Breast epithelium (tissue), 4 donors: ENCODE measurements at regions of chr6 and their contacts with region 1.

Region 1: DNA sequence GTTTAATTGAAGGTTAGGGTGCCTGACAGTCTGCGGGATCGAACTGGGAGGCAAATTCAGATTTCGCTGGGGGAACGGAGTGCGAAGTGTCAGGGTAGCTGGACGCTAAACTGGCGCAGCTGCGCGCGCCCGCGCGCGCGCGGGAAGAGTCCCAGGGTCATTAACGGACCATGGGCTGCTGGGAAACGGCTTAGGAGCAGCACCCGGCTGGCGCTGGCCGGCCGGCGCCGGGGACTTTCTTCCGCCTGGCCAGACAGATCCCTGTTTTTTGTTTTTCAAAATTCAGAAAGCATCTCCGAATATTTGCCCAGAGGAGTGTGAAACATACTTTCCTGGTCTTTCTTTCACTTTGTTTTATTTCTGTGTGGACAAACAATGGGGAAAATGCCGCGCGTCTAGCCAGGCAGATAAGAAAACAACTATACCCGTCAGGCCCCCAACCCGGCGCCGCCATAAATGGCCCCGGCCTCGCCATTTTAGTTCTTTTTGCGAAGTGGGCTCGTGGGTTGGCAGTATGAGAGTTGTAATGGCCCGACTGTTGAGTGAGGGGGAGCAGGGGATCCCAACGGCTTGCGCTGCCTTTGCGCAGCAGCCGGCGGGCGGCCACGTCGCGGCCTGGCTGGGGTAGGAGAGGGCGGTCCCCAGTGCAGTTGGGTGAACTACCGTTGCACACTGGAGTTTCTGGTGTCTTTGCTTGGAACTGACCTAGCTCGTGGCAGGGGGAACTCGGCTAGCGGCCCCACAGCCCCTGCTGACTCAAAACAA is 7.1 kb downstream of the HSPA1B start:
- DNase-seq: peak; percentile 82
- H3K4me3 ChIP-seq: peak overlapping the region; percentile 78 to 94 (median 90)
- H3K27ac ChIP-seq: peak overlapping the region; percentile 93 to 96
- H3K4me1 ChIP-seq: peaks cover 7 to 19% of the 10 kb centered on the region in 2 donors
- H3K27me3 ChIP-seq: no peaks in the 10 kb centered on the region
- CTCF ChIP-seq: peak in 1 of 3 donors; percentile 18
- POLR2A ChIP-seq: peak; percentile 61

Region 2: GRCh38 chr6:31614684-31615578 is 219.7 kb before region 1 on chr6 and contains the start of gene AIF1:
- intact Hi-C with region 1: no loop called
- DNase-seq: no peak
- H3K4me3 ChIP-seq: peak within 1 kb of the TSS in 2 of 3 donors; percentile 5 to 27
- H3K27ac ChIP-seq: no peak within 1 kb of the TSS
- H3K4me1 ChIP-seq: no peaks in the 10 kb centered on the region
- H3K27me3 ChIP-seq: no peaks in the 10 kb centered on the region
- CTCF ChIP-seq: no peak
- POLR2A ChIP-seq: no peak
- total RNA-seq, gene AIF1: 26.9 to 54.1 (median 28.2) TPM

Region 3: DNA sequence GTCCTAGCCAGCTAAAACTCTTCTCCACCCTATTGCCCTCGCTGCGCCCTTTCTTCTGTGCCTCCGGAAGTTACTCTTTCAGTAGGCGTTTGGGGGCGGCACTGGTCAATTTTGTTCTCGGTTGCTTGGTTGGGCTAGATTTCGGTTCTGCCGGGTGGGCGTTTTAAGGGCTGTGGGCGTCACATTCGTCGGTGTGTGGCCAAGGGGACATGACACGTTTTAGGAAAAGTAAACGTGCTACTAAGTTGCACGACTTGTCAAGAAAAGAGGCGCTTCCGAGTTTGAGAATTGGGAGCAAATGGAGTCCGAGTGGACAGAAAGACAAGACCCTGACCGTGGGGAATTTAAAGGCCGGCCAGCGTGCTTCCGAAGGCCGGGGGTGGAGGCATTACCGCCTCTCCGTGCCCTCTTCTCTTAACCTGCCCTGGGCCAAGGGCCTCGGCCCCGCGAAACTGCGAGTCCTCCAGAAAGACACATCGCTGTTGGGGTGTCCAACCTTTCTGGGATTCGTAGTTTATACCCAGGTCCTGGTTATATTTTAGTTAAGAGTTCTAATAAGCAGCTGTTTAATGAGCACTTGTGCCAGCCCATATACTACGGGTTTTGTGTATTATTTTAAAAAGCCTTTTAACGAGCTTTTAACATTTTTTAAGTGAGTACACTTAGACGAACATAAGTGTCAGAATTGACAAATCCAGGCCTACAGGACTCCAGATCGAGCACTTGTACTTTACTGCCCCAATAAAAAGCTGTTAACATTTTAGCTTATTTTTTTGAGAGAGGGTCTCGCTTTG is 181.5 kb before region 1 on chr6:
- intact Hi-C with region 1: loop called (anchors 10 kb)
- DNase-seq: peak; percentile 83 to 90
- H3K4me3 ChIP-seq: peak overlapping the region; percentile 59 to 85 (median 74)
- H3K27ac ChIP-seq: peak overlapping the region; percentile 97 to 99
- H3K4me1 ChIP-seq: peaks cover 0 to 7% of the 10 kb centered on the region in 2 donors
- H3K27me3 ChIP-seq: no peaks in the 10 kb centered on the region
- CTCF ChIP-seq: peak in 1 of 3 donors; percentile 0
- POLR2A ChIP-seq: no peak

Region 4: DNA sequence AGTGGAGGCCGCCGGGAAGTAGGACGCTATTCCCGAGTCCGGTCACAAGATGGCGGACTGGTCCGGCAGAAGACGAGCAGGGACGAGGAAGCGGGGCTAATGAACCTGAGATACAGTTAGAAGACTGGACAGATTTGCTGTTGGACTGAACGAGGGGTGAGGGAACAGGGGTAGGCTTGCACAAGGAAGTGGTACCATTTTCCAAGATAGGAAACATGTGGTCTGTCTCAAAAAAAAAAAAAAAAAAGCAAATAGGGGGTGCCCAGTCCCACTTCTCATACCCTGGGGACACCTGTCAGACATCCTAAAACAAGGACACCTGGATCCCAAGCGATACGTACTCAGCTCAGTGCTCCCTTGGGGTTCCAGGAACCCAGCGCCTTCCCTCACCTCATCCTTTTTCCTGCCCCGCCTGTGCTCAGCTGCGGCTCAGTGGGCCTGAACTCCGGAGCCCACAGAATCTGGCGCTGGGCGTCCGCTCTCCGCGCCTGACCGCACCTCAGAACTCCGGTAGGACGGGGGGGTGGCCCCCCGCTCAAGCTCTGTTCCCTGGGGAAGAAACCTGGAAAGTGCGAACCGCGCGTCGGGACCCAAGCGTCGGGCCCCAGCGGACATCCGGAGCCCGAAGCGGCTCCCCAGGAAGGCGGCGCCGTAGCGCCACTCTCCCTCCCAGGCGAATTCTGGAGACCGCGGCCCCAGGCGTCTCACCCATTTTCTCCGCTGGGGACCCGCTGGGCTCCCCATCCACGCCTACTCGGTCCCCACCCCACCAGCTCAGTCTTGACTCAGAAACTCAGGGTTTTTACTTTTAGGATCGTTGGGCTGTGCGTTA is 153.6 kb before region 1 on chr6 and contains the start of gene LY6G5C:
- intact Hi-C with region 1: loop called (anchors 5 kb)
- DNase-seq: peak; percentile 83 to 87
- H3K4me3 ChIP-seq: peak within 1 kb of the TSS; percentile 45 to 75 (median 58)
- H3K27ac ChIP-seq: peak within 1 kb of the TSS; percentile 73 to 79
- H3K4me1 ChIP-seq: no peaks in the 10 kb centered on the region
- H3K27me3 ChIP-seq: no peaks in the 10 kb centered on the region
- CTCF ChIP-seq: peak; percentile 47 to 81 (median 76)
- POLR2A ChIP-seq: no peak
- total RNA-seq, gene LY6G5C: 0.33 to 1.9 (median 0.64) TPM

Region 5: GRCh38 chr6:31729515-31729978 is 105.1 kb before region 1 on chr6:
- intact Hi-C with region 1: loop called (anchors 5 kb)
- DNase-seq: peak; percentile 91 to 95
- H3K4me3 ChIP-seq: peak overlapping the region; percentile 82 to 92 (median 88)
- H3K27ac ChIP-seq: peak overlapping the region; percentile 97 to 98
- H3K4me1 ChIP-seq: peaks cover 6 to 11% of the 10 kb centered on the region in 2 donors
- H3K27me3 ChIP-seq: no peaks in the 10 kb centered on the region
- CTCF ChIP-seq: peak; percentile 60 to 82 (median 65)
- POLR2A ChIP-seq: peak; percentile 28